Posterior cingulate gyrus (tissue), 11 donors: ENCODE measurements at regions of chr11 and their contacts with region 1.

Region 1: DNA sequence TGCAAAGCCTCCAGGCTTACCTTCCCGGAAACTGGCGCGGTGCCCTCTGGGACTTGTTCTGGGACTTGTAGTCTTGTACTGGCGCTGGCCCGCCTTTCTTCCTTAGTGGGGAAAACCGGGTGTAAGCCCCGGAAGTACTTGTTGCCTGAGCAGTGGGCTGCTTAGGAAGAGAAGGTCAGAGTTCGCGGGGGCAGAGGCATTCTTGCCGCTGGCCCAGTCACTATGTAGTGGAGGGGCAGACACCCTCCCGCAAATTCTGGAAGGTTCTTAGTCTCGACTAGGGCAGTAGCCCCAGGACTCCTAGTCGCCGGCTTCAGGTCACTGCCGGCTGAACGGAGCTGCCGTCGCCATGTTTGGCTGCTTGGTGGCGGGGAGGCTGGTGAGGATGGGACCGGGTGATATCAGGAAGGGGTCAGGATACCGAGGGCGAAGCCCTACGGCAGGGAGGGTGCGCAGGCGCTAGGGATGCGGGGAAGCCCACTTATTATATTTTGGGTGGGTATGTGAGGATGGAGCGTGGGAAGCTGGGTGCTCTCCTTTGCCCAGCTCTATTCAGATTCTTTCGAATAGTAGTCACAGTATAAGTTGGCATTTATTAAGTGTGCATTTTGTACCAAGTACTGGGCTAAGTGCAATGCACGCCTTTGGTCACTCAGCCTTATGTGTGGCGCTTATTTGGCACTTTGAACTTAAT is at the start of gene HIKESHI:
- DNase-seq: peak; percentile 100

Region 2: DNA sequence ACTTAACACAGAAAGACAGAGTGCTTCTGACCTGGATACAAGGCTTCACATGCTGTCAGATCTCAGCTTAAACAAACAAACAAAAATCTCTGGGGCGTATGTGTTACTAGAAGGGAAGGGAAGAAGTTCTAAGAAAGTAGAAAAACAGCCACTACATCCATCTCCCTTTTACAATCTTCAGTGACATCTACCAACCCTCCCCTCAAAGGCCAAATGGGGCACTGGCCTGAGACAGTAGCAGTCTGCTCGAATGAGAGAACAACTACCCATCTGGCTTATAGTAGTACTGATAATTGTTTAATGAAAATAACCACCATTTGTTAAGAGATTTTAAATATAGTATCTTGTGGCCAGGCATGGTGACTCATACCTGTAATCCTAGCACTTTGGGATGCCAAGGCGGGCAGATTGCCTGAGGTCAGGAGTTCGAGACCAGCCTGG is 417.6 kb before region 1 on chr11:
- intact Hi-C with region 1: no loop called
- DNase-seq: no peak

Region 3: GRCh38 chr11:86244522-86245368 is 57.5 kb before region 1 on chr11 and contains the start of gene EED:
- intact Hi-C with region 1: loop called (anchors 2 kb)
- DNase-seq: peak; percentile 89 to 99 (median 94)